ENCODE measurements at regions of chr17 and their contacts with region 1.

Region 1: DNA sequence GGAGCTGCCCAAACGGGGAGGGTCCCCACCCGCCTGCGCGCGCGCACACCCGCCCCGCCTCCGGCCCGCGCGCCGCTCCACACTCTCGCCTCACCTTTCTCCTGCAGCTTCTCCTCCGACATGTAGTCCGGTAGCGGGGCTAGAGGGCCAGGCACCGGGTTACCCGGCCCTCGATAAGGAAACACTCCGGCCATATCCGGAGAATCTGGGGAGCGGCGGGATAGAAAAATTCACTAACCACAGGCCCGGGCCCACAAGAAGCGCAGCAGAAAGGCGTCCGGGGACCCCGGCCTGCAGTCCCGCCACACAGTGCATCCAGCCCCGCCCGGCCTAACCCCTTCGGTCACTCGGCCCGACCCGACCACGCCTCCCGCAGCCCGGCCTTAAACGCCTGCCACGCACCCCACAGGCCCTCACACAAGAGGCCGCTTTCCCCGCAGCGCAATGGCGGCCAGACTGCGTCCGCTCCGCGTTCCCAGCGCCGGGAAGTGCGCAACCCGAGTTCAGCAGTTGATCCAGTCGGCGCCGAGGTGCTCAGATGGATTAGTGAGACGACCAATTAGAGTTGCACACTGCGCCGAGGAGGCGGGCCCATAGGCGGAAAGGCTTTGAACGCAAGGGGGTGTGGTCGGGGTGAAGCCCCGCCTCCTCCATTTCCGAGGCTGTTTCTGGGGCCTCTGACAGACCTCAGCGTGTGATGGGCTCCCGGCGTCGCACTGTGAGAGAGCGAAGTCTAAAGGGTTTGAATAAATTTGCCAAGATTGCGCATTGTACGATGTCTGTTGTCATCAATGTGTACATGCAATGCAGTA is at the start of gene PRPF8:
- DNase-seq: peak; percentile 95 to 99
- H3K4me3 ChIP-seq: peak within 1 kb of the TSS; percentile 71 to 90
- H3K27ac ChIP-seq: peak within 1 kb of the TSS; percentile 83 to 95
- H3K4me1 ChIP-seq: peaks cover 0 to 16% of the 10 kb centered on the region in 2 donors
- H3K27me3 ChIP-seq: no peaks in the 10 kb centered on the region
- CTCF ChIP-seq: no peak
- total RNA-seq, gene PRPF8: 114 TPM

Region 2: GRCh38 chr17:1648963-1649843 is 35.4 kb before region 1 on chr17:
- intact Hi-C with region 1: loop called (anchors 1 kb)
- DNase-seq: peak; percentile 86 to 98
- H3K4me3 ChIP-seq: peak overlapping the region; percentile 74 to 92
- H3K27ac ChIP-seq: peak overlapping the region; percentile 94 to 99
- H3K4me1 ChIP-seq: peaks cover 4 to 22% of the 10 kb centered on the region in 2 donors
- H3K27me3 ChIP-seq: no peaks in the 10 kb centered on the region
- CTCF ChIP-seq: peak in 2 of 3 experiments; percentile 94 to 97

Region 3: DNA sequence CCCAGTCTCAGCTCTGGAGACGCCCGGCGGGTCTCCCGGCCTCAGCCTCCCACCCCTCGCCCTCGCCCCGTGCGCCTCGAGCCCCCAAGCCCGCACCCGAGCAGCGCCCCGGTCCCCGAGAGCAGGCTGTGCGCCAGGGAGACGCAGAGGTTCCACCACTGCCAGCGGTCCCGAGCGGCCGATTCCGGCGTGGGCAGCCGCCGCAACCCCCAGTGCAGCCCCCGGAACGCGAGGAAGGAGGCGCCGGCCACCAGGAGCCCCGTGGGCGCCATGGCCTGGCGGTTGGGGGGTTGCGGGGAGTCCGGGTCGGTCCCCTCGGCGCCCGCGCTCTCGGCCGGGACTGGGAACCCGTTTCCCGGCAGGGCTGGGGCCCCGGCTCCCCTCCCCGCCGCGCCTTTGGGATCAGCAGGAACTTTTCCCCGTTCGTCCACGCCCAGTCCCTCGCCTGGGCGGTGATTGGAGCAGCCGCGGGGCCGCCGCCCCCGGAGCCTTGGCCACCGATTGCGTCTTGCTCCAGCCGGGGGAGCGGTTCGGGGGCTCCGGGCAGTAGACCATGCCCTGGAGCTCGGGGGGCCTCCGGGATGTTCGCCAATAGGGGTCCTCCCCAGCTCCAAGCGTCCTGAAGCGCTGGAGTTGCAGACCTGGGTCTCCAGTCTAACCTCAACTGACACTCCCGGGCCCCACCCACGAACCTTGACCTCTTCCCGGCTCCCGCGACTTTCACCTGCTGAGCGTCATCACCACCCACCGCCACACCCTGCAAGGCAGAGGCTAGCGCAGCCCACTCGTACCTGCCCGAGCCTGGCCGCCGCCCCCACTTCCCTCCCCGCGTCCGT is 25.6 kb after region 1 on chr17 and contains the start of gene TLCD2:
- intact Hi-C with region 1: loop called (anchors 1 kb)
- DNase-seq: peak in 1 of 2 donors; percentile 84
- H3K4me3 ChIP-seq: peak within 1 kb of the TSS; percentile 73 to 85
- H3K27ac ChIP-seq: peak within 1 kb of the TSS; percentile 79 to 80
- H3K4me1 ChIP-seq: peaks cover 16 to 44% of the 10 kb centered on the region in 2 donors
- H3K27me3 ChIP-seq: no peaks in the 10 kb centered on the region
- CTCF ChIP-seq: peak in 1 of 3 experiments; percentile 4
- total RNA-seq, gene TLCD2: 7.5 TPM